Right ventricle myocardium superior (tissue), 1 donor: ENCODE measurements at regions of chr2 and their contacts with region 1.

Region 1: GRCh38 chr2:71458413-71459079 is 5.2 kb downstream of the DYSF start:
- DNase-seq: no peak
- ATAC-seq: peak; percentile 55

Region 2: DNA sequence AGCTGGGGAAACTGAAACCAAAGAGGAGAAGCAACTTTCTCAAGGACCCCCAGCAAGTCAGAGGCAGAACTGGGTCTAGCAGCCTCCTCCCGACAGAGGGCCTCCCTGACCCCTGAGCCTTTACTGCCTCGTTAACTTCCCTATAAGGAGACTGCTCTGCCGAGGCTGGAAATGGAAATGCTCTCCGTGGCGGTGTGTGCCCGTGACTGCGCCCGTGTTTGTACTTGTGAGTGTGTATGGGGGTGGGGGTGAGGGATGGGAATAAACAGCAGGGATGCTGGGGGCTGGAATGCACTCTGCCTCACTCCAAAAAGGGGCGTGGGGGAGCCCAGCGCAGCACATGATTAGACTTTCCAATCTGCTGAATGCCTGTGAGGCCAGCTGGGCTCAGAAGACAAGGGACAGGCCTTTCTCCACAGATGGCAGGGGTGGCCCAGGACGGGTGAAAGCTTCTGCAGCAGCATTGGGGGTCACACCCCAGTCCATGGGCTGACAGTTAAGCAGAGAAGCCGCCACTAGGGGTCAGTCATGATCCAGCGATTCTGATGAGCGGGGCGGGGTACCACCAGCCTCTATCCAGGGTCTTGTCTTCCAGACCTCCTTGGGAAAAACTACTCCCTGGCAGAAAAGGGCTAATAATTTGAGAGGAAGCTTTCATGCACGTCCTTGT is 301.3 kb before region 1 on chr2:
- intact Hi-C with region 1: no loop called
- DNase-seq: peak; percentile 57
- ATAC-seq: peak; percentile 85

Region 3: GRCh38 chr2:71250945-71251344 is 207.6 kb before region 1 on chr2:
- intact Hi-C with region 1: no loop called
- DNase-seq: no peak
- ATAC-seq: no peak

Region 4: GRCh38 chr2:71505086-71505769 is 46.7 kb after region 1 on chr2:
- intact Hi-C with region 1: loop called (anchors 2 kb)
- DNase-seq: no peak
- ATAC-seq: peak; percentile 8

Region 5: GRCh38 chr2:71510196-71510807 is 51.8 kb after region 1 on chr2:
- intact Hi-C with region 1: loop called (anchors 2 kb)
- DNase-seq: peak; percentile 80
- ATAC-seq: peak; percentile 76